ENCODE measurements at regions of chr4 and their contacts with region 1.

Region 1: DNA sequence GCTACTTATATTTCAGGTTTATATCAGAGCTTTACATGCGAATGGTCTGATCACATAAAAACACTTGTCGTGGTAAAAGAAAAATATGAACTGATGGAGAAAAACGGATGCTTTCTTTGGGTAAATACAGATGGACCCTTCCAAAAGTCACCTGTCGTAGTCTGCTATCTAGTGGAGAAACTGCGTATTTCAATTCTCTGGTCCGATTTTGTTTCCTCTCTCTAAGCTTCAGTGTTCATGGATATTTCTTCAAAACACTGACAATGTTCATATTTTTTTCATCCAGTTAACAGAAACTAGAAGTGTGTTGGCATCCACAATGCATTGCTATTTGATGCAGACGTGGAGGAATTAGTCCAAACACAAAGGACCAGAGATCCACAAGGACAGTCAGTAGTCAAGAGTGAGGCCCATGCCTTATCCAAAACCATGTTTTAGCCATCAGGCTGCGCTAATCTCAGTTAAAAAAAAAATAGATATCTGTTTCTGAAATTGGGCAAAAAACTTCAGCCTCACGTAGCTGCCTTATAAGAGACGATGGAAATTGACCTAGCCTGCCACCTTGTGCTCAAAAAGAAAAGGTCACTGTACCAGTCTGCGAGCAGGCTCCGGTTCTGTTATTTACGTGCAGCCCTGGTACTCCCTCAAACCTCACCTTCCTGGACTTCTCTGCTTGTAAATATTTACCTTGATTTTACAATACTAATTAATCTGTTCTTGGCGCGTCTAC is 16.0 kb downstream of the MEPE start:
- DNase-seq: peak in 1 of 2 donors; percentile 23
- ATAC-seq: peak; percentile 74

Region 2: DNA sequence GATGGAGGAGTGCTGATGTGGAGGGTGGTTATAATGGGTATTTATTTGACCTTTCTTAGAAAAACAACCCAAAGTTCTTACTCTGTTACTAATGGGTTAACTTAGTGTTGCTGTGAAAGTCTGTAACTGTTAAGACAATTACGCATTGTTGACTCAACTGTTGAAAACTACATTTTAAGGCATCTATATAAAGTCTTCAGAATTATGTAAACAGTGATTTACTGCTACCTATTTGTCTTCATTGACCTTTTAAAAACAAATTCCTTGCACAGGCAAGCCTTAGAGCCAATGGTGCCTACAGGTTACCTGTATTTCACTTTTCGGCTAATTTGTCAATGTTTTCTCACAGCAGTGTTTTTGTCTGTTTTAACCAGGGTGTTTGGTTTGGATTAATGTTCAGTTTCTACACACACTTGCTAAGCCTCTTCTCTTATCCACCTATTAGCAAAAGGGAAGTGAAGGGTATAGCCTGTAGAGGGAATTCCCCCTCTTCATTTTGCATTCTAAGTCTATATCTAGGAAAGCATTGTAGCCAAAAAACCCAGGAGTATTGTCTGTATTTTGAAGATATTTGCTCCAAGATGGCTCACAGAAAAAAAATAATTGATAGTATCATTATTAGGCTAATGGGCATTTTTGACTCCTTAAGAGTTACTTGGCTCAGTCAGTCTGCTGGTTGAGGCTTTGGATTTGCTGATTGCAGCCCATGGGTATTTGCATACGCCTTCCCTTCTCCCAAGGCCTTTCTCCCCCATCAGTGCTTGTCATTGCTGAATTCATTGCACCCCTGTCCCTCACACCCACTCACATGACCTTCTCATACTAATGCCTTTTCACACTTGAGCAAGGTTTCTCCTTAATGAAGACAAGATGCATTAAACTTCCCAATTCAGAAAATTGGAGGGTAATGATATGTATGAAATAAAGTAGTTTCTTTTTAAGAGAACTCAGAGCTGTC is 883.5 kb before region 1 on chr4:
- intact Hi-C with region 1: no loop called
- DNase-seq: no peak
- ATAC-seq: no peak

Region 3: GRCh38 chr4:87679449-87680169 is 169.2 kb before region 1 on chr4:
- intact Hi-C with region 1: loop called in 1 of 2 experiments (anchors 5 kb)
- DNase-seq: no peak
- ATAC-seq: no peak

Region 4: DNA sequence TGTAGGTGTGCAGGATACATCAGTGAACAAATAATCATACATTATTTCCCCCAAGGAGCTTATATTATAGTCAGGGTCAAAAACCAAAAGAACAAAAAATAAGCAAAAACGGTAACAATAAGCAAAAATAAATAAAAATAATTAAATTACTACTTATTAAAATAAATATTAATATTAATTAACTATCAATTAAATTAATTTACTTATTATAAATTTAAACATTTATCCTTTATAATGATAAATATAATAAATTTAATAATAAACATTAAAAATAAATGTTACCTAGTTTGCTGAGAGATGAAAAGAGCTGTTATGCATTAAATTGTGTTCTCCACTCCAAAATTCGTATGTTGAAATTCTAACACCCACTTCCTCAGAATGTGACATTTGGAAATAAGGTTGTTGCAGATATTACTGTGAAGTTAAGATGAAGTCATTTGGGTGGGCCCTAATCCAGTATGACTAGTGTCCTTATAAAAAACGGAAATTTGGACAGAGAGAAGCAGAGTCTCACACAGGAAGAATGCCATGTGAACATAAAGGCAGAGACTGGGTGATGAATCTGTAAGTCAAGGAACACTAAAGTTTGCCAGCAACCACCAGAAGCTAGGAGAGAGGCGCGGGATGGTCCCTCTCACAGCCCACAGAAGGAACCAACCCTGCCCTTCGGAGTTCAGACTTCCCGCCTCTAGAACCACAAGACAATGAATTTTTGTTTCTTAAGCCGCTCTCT is 116.6 kb before region 1 on chr4:
- intact Hi-C with region 1: no loop called
- DNase-seq: no peak
- ATAC-seq: no peak

Region 5: DNA sequence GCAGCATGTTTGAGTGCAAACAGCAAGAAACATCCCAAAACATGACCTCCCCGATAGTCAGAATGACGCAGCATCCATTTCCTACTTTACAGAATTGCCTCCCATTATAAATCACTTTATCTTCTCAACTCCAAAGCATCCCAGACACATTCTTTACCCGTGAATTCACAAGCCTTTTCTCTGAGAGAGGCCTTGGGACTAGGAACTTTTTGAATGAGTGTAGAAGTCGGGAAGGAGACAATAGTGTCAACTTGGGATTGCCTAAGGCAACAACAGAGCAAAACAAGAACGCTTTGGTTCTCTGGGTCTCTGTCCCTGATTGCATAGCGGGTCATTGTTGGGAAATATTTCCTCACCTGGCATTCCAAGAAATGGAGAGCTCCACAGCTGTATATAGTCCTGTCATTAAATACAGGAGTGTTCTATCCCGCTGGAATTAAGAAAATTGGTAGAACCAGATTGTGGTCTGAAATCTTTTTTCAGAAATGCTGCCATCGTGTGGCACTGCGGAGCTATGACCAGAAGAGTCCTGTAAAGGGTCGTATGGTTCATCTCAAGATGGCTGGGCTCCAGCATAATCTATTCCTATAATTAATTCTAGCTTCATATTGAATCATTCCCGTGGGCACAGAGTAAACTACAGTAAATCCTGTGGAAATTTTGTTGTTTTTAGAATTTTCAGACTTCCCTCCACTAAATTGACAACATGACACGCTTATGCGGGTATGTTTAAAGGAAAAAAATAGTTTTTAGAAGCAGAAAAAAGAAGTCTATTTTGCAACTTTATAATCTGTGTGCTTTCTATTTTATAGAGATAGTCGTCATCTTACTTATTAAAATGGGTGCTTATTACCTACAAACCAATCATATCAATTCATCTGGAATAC is 124.7 kb after region 1 on chr4:
- intact Hi-C with region 1: loop called in 1 of 2 experiments (anchors 5 kb)
- DNase-seq: peak in 1 of 2 donors; percentile 34
- ATAC-seq: peak; percentile 55